Calu3 (cell line): ENCODE measurements at regions of chr4 and their contacts with region 1.

Region 1: GRCh38 chr4:183505611-183506388 is 942 bp downstream of the ING2 start:
- DNase-seq: peak; percentile 79
- H3K4me3 Mint-ChIP-seq: peak overlapping the region; percentile 90
- H3K27ac Mint-ChIP-seq: peak overlapping the region; percentile 77
- H3K4me1 Mint-ChIP-seq: no peaks in the 10 kb centered on the region
- H3K27me3 Mint-ChIP-seq: no peaks in the 10 kb centered on the region
- CTCF ChIP-seq: no peak

Region 2: DNA sequence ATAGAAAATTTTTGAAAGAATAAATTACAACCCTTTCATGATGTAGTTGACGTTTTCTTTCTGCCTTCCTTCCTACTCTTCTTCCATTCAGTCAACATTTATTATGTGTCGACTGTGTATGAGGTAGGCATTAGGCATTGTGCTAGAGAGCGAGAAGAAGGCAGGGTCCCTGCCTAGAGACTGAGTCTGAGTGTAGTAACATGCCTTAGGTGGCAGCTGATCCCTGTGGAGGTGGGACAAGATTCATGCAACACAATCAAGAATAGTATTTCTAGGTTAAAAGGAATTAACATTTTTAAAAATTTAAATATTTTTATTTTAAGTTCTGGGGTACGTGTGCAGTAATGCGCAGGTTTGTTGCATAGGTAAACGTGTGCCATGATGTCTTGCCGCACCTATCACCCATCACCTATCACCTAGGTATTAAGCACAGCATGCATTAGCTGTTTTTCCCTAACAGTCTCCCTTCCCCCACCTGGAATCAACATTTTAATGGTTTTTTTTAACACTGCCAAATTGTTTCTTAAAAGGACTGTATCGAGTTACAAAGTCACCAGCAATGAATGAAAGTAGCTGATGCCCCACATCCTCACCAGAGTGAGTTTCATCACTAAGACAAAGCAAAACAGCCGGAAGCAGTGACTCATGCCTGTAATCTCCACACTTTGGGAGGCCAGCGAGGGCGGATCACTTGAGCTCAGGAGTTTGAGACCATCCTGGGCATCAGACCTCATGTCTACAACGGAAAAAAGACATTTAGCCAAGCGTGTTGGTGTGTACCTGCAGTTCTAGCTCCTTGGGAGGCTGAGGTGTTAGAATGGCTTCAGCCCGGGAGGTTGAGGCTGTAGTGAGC is 322.7 kb before region 1 on chr4:
- CTCF ChIA-PET with region 1: no interaction called
- intact Hi-C with region 1: no loop called
- DNase-seq: peak; percentile 61
- H3K4me3 Mint-ChIP-seq: no peak overlapping the region
- H3K27ac Mint-ChIP-seq: no peak overlapping the region
- H3K4me1 Mint-ChIP-seq: peaks cover 34% of the 10 kb centered on the region
- H3K27me3 Mint-ChIP-seq: no peaks in the 10 kb centered on the region
- CTCF ChIP-seq: no peak

Region 3: GRCh38 chr4:183444214-183445066 is 61.4 kb before region 1 on chr4 and contains the start of gene CDKN2AIP:
- CTCF ChIA-PET with region 1: no interaction called
- intact Hi-C with region 1: no loop called
- DNase-seq: peak; percentile 87
- H3K4me3 Mint-ChIP-seq: peak within 1 kb of the TSS; percentile 90
- H3K27ac Mint-ChIP-seq: peak within 1 kb of the TSS; percentile 83
- H3K4me1 Mint-ChIP-seq: peaks cover 25% of the 10 kb centered on the region
- H3K27me3 Mint-ChIP-seq: no peaks in the 10 kb centered on the region
- CTCF ChIP-seq: no peak
- total RNA-seq, gene CDKN2AIP: 17.2 and 17.5 TPM in 2 replicates

Region 4: GRCh38 chr4:183636923-183637322 is 131.1 kb after region 1 on chr4:
- CTCF ChIA-PET with region 1: no interaction called
- intact Hi-C with region 1: loop called (anchors 5 kb)
- DNase-seq: peak; percentile 36
- H3K4me3 Mint-ChIP-seq: peak overlapping the region; percentile 60
- H3K27ac Mint-ChIP-seq: peak overlapping the region; percentile 88
- H3K4me1 Mint-ChIP-seq: peaks cover 17% of the 10 kb centered on the region
- H3K27me3 Mint-ChIP-seq: no peaks in the 10 kb centered on the region
- CTCF ChIP-seq: no peak